Breast epithelium (tissue), 4 donors: ENCODE measurements at regions of chr1 and their contacts with region 1.

Region 1: GRCh38 chr1:11611638-11612327 is 42.4 kb downstream of the FBXO2 start:
- DNase-seq: no peak
- H3K4me3 ChIP-seq: no peak overlapping the region
- H3K27ac ChIP-seq: no peak overlapping the region
- H3K4me1 ChIP-seq: no peaks in the 10 kb centered on the region
- H3K27me3 ChIP-seq: no peaks in the 10 kb centered on the region
- CTCF ChIP-seq: no peak
- POLR2A ChIP-seq: no peak

Region 2: GRCh38 chr1:10856863-10857598 is 754.8 kb before region 1 on chr1:
- intact Hi-C with region 1: loop called (anchors 5 kb)
- DNase-seq: no peak
- H3K4me3 ChIP-seq: no peak overlapping the region
- H3K27ac ChIP-seq: no peak overlapping the region
- H3K4me1 ChIP-seq: no peaks in the 10 kb centered on the region
- H3K27me3 ChIP-seq: no peaks in the 10 kb centered on the region
- CTCF ChIP-seq: no peak
- POLR2A ChIP-seq: no peak

Region 3: DNA sequence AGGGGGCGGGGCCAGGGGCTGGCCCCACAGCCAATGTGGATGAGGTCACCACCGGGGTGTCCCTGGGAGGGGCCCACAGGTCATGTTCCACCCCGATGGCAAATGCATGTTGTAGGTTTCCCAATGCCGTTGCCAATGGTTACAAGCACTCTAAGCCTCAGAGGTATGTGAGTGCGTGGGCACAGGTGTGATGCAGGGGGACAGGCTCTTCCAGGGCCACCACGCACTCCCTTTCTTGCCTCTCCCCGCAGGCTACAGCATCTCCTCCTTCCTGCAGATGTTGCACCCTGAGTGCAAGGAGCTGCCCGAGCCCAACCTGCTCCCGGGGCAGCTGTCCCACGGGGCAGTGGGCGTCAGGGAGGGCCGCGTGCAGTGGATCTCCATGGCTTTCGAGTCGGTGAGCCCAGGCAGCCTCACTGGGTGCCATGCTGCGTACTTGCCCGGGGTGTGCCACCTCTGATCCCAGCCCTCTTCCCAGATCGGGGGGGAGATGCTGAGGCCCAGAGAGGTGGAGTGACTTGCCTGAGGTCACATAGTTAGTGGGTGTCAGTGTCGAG is 80.4 kb before region 1 on chr1:
- intact Hi-C with region 1: no loop called
- DNase-seq: peak in 1 of 2 donors; percentile 57
- H3K4me3 ChIP-seq: no peak overlapping the region
- H3K27ac ChIP-seq: no peak overlapping the region
- H3K4me1 ChIP-seq: no peaks in the 10 kb centered on the region
- H3K27me3 ChIP-seq: peaks cover 0 to 7% of the 10 kb centered on the region in 2 donors
- CTCF ChIP-seq: no peak
- POLR2A ChIP-seq: no peak